T-cell (primary cell): ENCODE measurements at regions of chr1 and their contacts with region 1.

Region 1: GRCh38 chr1:214952648-214953047 is 129.9 kb upstream of the KCNK2 start:
- DNase-seq: no peak
- ATAC-seq: no peak
- H3K4me3 ChIP-seq: no peak overlapping the region
- H3K4me3 Mint-ChIP-seq: no peak overlapping the region
- H3K27ac ChIP-seq: no peak overlapping the region
- H3K27ac Mint-ChIP-seq: no peak overlapping the region
- H3K4me1 ChIP-seq: no peaks in the 10 kb centered on the region
- H3K4me1 Mint-ChIP-seq: no peaks in the 10 kb centered on the region
- H3K27me3 ChIP-seq: no peaks in the 10 kb centered on the region
- H3K27me3 Mint-ChIP-seq: peaks cover 0 to 27% of the 10 kb centered on the region in 2 donors

Region 2: GRCh38 chr1:214623430-214623829 is 329.2 kb before region 1 on chr1:
- CTCF ChIA-PET with region 1: no interaction called
- POLR2A ChIA-PET with region 1: no interaction called
- DNase-seq: no peak
- ATAC-seq: no peak
- H3K4me3 ChIP-seq: no peak overlapping the region
- H3K4me3 Mint-ChIP-seq: no peak overlapping the region
- H3K27ac ChIP-seq: no peak overlapping the region
- H3K27ac Mint-ChIP-seq: no peak overlapping the region
- H3K4me1 ChIP-seq: peaks cover 0 to 2% of the 10 kb centered on the region in 2 experiments
- H3K4me1 Mint-ChIP-seq: peaks cover 0 to 4% (median 3%) of the 10 kb centered on the region in 3 donors
- H3K27me3 ChIP-seq: no peaks in the 10 kb centered on the region
- H3K27me3 Mint-ChIP-seq: no peaks in the 10 kb centered on the region

Region 3: DNA sequence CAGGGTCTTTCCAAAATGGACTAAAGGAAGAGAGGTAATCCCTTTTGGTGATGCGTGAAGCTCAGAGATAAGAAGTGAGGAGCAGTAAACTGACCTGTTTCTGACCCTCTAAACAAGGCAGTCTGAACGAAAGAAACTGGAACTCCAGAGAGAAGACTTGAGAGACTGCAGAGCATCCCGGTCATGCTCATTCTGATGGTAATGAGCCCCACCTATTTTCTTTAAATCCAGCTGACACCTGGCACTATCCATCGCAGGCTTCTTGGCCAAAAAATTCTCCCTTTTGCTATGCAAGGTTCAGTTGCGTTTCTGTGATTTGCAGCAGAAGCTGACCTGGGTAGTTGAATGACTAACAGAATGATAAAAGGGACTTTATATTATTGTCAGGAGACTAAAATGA is 24.0 kb after region 1 on chr1:
- CTCF ChIA-PET with region 1: no interaction called
- POLR2A ChIA-PET with region 1: interaction called in 1 of 2 experiments, 12 read pairs
- DNase-seq: no peak
- ATAC-seq: no peak
- H3K4me3 ChIP-seq: no peak overlapping the region
- H3K4me3 Mint-ChIP-seq: no peak overlapping the region
- H3K27ac ChIP-seq: no peak overlapping the region
- H3K27ac Mint-ChIP-seq: no peak overlapping the region
- H3K4me1 ChIP-seq: no peaks in the 10 kb centered on the region
- H3K4me1 Mint-ChIP-seq: no peaks in the 10 kb centered on the region
- H3K27me3 ChIP-seq: no peaks in the 10 kb centered on the region
- H3K27me3 Mint-ChIP-seq: peaks cover 0 to 8% of the 10 kb centered on the region in 2 donors

Region 4: GRCh38 chr1:215140135-215140534 is 187.5 kb after region 1 on chr1:
- CTCF ChIA-PET with region 1: no interaction called
- POLR2A ChIA-PET with region 1: no interaction called
- DNase-seq: no peak
- ATAC-seq: no peak
- H3K4me3 ChIP-seq: no peak overlapping the region
- H3K4me3 Mint-ChIP-seq: no peak overlapping the region
- H3K27ac ChIP-seq: no peak overlapping the region
- H3K27ac Mint-ChIP-seq: no peak overlapping the region
- H3K4me1 ChIP-seq: no peaks in the 10 kb centered on the region
- H3K4me1 Mint-ChIP-seq: no peaks in the 10 kb centered on the region
- H3K27me3 ChIP-seq: no peaks in the 10 kb centered on the region
- H3K27me3 Mint-ChIP-seq: no peaks in the 10 kb centered on the region